Left ventricle myocardium inferior (tissue), 1 donor: ENCODE measurements at regions of chr12 and their contacts with region 1.

Region 1: GRCh38 chr12:53352331-53353256 is 16.4 kb upstream of the SP7 start:
- DNase-seq: peak; percentile 78
- H3K4me3 ChIP-seq: no peak overlapping the region
- H3K27ac ChIP-seq: no peak overlapping the region
- H3K4me1 ChIP-seq: no peaks in the 10 kb centered on the region
- H3K27me3 ChIP-seq: no peaks in the 10 kb centered on the region
- CTCF ChIP-seq: peak; percentile 89

Region 2: DNA sequence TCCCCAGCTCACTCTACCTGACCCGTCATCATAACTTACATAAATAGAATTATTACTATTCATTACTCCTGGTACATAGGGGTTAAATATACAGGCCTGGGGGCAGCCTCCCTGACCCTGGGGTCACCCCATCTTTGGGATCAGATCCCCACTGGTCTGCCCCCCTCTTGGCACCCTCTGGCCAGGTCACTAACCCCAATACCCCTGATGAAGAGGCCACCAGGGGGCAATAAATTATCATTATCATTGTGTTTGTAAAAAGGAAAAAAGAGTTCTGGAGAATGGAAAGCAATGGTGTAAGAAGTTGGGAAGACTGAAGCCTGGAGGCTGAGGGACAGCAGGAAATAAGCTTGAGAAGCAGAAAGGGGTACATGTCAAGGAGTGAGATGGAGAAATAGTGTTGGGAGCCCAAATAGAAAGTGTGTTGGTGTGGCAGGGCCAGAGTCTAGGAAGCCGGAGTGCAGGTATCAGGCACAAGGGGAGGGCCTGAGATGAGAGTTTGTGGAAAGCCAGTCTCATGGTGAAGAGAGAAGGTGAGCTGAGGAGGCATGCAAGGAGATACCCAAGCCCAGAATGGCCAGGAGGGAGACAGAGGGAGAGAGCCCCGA is 25.1 kb before region 1 on chr12:
- intact Hi-C with region 1: no loop called
- DNase-seq: no peak
- H3K4me3 ChIP-seq: no peak overlapping the region
- H3K27ac ChIP-seq: no peak overlapping the region
- H3K4me1 ChIP-seq: peaks cover 25% of the 10 kb centered on the region
- H3K27me3 ChIP-seq: peaks cover 29% of the 10 kb centered on the region
- CTCF ChIP-seq: peak; percentile 39

Region 3: GRCh38 chr12:53424626-53425514 is 72.3 kb after region 1 on chr12:
- intact Hi-C with region 1: loop called (anchors 1 kb)
- DNase-seq: no peak
- H3K4me3 ChIP-seq: no peak overlapping the region
- H3K27ac ChIP-seq: no peak overlapping the region
- H3K4me1 ChIP-seq: peaks cover 11% of the 10 kb centered on the region
- H3K27me3 ChIP-seq: no peaks in the 10 kb centered on the region
- CTCF ChIP-seq: no peak

Region 4: DNA sequence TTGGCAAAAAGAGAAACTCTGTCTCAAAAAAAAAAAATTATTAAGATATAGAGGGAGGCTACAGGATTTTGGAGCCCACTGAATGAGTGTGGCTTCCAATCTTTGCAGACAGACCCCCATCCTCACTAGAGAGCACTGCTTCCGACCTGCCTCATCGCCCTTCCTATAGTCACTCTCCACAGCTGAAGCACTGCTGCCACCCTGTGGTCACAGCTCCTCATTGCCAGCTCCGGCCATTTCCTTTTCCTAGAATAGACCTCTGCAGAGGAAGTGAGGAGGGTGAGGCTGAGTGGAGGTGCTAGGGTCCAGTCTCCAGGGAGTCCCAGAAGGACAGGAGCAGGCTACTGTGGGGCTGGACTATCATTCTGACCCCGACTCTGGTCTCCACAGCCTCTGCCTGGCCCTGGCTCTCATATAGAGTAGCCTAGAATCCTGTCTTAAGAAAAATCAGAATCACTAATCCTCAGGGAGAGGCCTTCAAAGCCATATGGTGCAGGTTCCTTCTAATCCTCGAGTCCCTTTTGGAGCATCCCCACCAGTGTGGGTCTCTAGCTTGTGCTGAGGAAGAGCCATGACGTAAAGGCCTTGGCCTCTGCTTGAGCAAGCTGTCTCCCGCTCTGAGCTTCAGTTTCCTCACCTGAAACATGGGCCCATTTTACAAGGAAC is 156.1 kb after region 1 on chr12:
- intact Hi-C with region 1: loop called (anchors 2 kb)
- DNase-seq: peak; percentile 82
- H3K4me3 ChIP-seq: no peak overlapping the region
- H3K27ac ChIP-seq: peak overlapping the region; percentile 72
- H3K4me1 ChIP-seq: peaks cover 12% of the 10 kb centered on the region
- H3K27me3 ChIP-seq: no peaks in the 10 kb centered on the region
- CTCF ChIP-seq: peak; percentile 96